Body of pancreas (tissue), 4 donors: ENCODE measurements at regions of chr2 and their contacts with region 1.

Region 1: DNA sequence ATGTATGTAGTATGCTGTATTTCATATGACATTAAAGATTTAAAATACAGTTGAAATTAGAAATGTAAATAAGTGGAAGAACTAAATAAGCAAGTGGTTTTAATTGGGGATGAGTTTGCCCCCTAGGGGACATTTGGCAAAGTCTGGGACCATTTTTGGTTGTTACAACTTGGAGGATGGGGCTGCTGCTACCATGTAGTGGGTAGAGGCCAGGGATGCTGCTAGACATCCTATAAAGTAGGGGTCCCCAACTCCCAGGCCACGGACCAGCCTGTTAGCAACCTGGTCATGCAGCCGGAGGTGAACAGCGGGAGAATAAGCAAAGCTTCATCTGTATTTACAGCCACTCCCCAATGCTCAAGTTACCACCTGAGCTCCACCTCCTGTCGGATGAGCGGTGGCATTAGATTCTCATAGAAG is 27.9 kb upstream of the ASNSD1 start:
- DNase-seq: peak in 1 of 4 donors; percentile 13
- ATAC-seq: no peak
- H3K4me3 ChIP-seq: no peak overlapping the region
- H3K27ac ChIP-seq: no peak overlapping the region
- H3K4me1 ChIP-seq: no peaks in the 10 kb centered on the region
- H3K27me3 ChIP-seq: no peaks in the 10 kb centered on the region
- CTCF ChIP-seq: peak in 5 of 7 experiments; percentile 21 to 46 (median 33)
- POLR2A ChIP-seq: no peak

Region 2: DNA sequence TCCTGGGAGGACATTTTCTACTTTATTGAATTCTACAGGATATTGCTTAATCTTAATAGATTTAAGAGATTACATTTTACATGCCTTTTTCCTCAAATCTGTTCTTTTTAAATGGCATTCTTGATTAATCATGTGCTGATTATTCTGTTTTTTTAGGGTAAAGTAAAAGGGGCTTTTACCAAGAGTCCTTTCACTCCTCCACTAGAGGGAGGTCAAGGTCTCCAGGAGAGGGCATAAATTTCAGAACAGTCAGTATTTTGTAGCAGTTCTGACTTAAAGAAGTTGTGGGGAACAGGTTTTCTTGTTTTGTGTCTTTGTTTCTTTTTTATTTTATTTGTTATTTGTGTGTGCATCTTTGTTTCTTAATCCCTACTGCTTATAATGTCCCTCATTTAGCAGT is 166.7 kb before region 1 on chr2:
- intact Hi-C with region 1: loop called (anchors 10 kb)
- DNase-seq: no peak
- ATAC-seq: peak; percentile 45
- H3K4me3 ChIP-seq: no peak overlapping the region
- H3K27ac ChIP-seq: no peak overlapping the region
- H3K4me1 ChIP-seq: no peaks in the 10 kb centered on the region
- H3K27me3 ChIP-seq: no peaks in the 10 kb centered on the region
- CTCF ChIP-seq: peak in 6 of 7 experiments; percentile 35 to 60 (median 45)
- POLR2A ChIP-seq: no peak